Activated B cell treated with CpG ODN at 0.5 μM for 24 hours (primary cell): ENCODE measurements at regions of chr2 and their contacts with region 1.

Region 1: GRCh38 chr2:15577071-15577735 is 14.5 kb upstream of the DDX1 start:
- DNase-seq: peak; percentile 54
- ATAC-seq: peak; percentile 98
- H3K4me3 Mint-ChIP-seq: no peak overlapping the region
- H3K27ac Mint-ChIP-seq: no peak overlapping the region
- H3K4me1 Mint-ChIP-seq: peaks cover 3% of the 10 kb centered on the region
- H3K27me3 Mint-ChIP-seq: peaks cover 3% of the 10 kb centered on the region
- CTCF ChIP-seq: no peak

Region 2: GRCh38 chr2:14363976-14364375 is 1213.2 kb before region 1 on chr2:
- CTCF ChIA-PET with region 1: no interaction called
- POLR2A ChIA-PET with region 1: no interaction called
- intact Hi-C with region 1: no loop called
- DNase-seq: no peak
- ATAC-seq: no peak
- H3K4me3 Mint-ChIP-seq: no peak overlapping the region
- H3K27ac Mint-ChIP-seq: no peak overlapping the region
- H3K4me1 Mint-ChIP-seq: no peaks in the 10 kb centered on the region
- H3K27me3 Mint-ChIP-seq: no peaks in the 10 kb centered on the region
- CTCF ChIP-seq: no peak

Region 3: GRCh38 chr2:14642499-14642898 is 934.7 kb before region 1 on chr2:
- CTCF ChIA-PET with region 1: no interaction called
- POLR2A ChIA-PET with region 1: no interaction called
- intact Hi-C with region 1: loop called (anchors 5 kb)
- DNase-seq: no peak
- ATAC-seq: no peak
- H3K4me3 Mint-ChIP-seq: no peak overlapping the region
- H3K27ac Mint-ChIP-seq: no peak overlapping the region
- H3K4me1 Mint-ChIP-seq: no peaks in the 10 kb centered on the region
- H3K27me3 Mint-ChIP-seq: no peaks in the 10 kb centered on the region
- CTCF ChIP-seq: no peak

Region 4: DNA sequence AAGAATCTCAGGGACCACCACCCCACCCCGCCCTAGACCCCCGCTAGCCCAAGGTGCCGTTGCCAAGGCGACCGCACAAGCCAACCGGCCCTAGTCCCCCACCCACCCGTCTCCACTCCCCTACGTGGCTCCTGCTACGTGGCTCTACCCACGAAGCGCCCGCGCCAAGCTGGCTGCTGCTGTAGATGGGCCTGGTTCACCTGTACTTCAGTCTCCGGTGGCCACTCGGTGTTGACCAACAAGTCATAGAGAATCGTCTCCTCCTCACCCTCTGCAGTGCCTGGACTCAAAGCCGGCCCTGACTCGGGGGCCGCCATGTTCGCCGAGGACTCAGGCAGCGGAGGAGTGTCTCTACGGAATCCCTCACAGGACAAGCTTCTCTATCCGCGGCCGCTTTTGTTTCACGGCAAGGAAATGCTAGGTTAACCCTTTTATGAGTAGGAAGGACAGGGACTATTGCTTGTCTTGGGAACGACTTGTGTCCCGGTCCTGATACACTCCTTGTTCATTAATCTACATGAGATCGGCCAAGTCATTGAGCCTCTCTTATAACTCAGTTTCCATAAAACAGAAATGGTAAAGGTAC is 16.1 kb before region 1 on chr2 and contains the start of gene NBAS:
- CTCF ChIA-PET with region 1: interaction called, 12 read pairs
- POLR2A ChIA-PET with region 1: interaction called, 5 read pairs
- intact Hi-C with region 1: no loop called
- DNase-seq: peak; percentile 54
- ATAC-seq: peak; percentile 92
- H3K4me3 Mint-ChIP-seq: peak within 1 kb of the TSS; percentile 100
- H3K27ac Mint-ChIP-seq: peak within 1 kb of the TSS; percentile 89
- H3K4me1 Mint-ChIP-seq: peaks cover 31% of the 10 kb centered on the region
- H3K27me3 Mint-ChIP-seq: peaks cover 3% of the 10 kb centered on the region
- CTCF ChIP-seq: no peak
- total RNA-seq, gene NBAS: 39.1 and 40.1 TPM in 2 replicates

Region 5: GRCh38 chr2:15591692-15592463 is 14.7 kb after region 1 on chr2 and contains the start of gene DDX1:
- CTCF ChIA-PET with region 1: interaction called, 29 read pairs
- POLR2A ChIA-PET with region 1: interaction called, 5 read pairs
- intact Hi-C with region 1: no loop called
- DNase-seq: peak; percentile 83
- ATAC-seq: peak; percentile 93
- H3K4me3 Mint-ChIP-seq: peak within 1 kb of the TSS; percentile 95
- H3K27ac Mint-ChIP-seq: peak within 1 kb of the TSS; percentile 91
- H3K4me1 Mint-ChIP-seq: peaks cover 29% of the 10 kb centered on the region
- H3K27me3 Mint-ChIP-seq: no peaks in the 10 kb centered on the region
- CTCF ChIP-seq: no peak
- total RNA-seq, gene DDX1: 72.4 and 74.4 TPM in 2 replicates

Region 6: DNA sequence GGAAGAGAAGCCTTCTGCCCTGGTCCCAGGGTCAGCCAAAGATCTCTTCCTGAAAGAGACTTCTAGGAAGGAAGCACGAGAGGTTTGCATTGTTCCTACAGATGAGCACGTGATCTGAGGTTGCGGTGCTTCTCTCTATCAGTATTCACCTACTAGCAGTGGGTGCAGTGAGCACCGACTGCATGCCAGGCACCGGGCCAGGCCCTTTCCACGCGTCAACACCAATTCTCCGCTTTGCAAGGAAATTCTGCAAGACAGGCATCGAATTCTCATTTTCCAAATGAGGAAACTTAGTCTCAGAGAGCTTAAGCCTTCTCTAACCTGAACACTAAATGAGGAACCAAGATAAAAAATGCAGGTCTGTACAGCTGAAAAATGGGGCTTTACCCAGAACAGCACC is 211.6 kb after region 1 on chr2:
- CTCF ChIA-PET with region 1: no interaction called
- POLR2A ChIA-PET with region 1: no interaction called
- intact Hi-C with region 1: no loop called
- DNase-seq: no peak
- ATAC-seq: no peak
- H3K4me3 Mint-ChIP-seq: no peak overlapping the region
- H3K27ac Mint-ChIP-seq: no peak overlapping the region
- H3K4me1 Mint-ChIP-seq: no peaks in the 10 kb centered on the region
- H3K27me3 Mint-ChIP-seq: no peaks in the 10 kb centered on the region
- CTCF ChIP-seq: no peak